HEK293T (cell line): ENCODE measurements at regions of chr19 and their contacts with region 1.

Region 1: DNA sequence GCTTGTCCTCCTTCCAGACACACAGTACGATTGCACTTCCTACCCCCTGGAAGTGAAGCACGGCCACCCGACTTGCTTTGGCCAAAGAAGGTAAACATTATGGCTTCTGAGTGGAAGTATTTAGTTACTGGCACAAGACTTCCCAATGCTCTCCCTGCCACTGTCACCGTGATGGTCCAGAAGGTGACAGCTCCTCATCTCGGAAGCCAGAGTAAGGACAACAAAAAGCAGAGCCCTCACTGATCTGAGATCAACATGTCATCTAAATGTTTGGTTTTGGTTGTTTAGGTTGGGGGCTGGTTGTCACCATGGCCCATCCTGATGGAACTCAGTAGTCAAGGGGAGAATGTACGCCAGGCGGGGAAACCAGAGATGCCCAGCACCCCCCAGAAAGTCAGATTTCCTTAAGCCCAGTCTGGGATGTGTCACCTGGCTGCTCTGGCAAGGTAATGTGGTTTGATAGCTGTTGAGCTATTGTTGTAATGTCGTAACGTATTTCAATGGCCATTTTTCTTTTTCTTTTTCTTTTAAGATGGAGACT is 170.1 kb upstream of the ZNF536 start:
- DNase-seq: no peak

Region 2: DNA sequence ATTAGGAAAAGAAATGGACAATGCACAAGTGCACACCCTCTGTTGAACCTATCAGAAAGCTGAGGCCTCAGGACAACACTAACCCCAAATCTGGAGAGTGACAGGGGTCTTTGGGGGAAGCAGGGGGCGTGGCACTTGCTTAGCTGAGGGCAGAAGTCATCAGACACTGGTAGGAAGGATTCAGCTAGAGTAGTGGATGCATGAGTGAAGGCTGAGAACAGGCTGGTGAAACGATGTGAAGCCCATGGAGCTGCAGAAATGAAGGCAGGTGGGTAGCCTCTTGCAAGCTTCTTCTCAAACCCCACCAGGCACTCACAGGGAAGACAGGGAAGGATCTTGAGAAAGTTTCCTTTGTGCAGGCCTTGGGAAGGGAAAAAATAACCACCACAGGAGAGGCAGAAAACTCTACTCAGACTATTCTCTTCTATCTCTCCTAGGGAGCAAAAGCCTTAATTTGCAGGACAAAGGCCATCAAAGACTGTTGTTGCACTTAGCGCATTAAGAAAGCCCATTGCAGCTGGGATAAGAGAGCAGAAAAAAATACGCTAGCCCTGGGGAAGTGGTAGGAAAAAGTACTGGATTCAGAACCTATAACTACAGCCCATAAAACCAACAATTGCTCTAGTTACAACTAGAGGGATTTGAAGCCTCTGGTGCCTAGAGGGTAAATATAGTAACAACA is 23.3 kb before region 1 on chr19:
- CTCF ChIA-PET with region 1: no interaction called
- POLR2A ChIA-PET with region 1: no interaction called
- DNase-seq: no peak

Region 3: DNA sequence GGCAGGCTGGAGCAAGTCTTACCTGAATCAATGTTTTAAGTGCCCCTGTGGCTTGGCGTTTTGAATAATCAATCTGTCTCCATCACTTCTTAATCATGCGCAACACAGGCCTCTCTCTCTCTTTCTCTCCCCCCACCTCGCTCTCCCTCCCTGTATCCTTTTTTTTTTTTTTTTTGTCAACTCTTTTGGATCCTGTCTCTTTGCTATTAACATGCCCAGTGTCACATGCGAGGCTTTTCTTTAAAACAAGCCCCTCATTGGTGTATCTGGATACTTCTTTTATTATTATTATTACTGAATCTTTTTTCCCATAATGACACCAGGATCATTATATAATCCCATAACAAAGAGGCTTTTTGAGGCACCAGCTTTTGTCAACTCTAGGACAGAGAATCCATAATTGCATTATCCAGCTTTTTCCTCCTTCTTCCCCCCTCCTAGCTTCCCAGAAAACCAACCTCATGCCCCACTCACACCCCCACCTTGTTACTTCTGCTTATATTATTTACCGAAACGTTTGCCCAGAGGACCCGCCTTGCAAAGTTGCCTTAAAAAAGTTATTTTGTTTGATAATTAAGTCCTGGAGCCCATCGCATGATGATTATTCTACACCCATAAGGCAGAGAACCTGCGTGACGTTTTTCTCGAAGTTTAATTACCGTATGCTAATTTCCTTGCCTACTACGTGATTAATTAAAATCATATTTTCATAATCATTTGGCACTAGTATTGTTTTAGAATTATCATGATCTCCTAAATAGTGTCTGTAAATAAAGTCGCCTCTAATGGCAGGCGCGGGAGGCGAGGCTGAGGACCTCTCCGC is 21.9 kb after region 1 on chr19:
- CTCF ChIA-PET with region 1: interaction called, 10 read pairs
- POLR2A ChIA-PET with region 1: no interaction called
- DNase-seq: no peak